ENCODE measurements at regions of chr17 and their contacts with region 1.

Region 1: DNA sequence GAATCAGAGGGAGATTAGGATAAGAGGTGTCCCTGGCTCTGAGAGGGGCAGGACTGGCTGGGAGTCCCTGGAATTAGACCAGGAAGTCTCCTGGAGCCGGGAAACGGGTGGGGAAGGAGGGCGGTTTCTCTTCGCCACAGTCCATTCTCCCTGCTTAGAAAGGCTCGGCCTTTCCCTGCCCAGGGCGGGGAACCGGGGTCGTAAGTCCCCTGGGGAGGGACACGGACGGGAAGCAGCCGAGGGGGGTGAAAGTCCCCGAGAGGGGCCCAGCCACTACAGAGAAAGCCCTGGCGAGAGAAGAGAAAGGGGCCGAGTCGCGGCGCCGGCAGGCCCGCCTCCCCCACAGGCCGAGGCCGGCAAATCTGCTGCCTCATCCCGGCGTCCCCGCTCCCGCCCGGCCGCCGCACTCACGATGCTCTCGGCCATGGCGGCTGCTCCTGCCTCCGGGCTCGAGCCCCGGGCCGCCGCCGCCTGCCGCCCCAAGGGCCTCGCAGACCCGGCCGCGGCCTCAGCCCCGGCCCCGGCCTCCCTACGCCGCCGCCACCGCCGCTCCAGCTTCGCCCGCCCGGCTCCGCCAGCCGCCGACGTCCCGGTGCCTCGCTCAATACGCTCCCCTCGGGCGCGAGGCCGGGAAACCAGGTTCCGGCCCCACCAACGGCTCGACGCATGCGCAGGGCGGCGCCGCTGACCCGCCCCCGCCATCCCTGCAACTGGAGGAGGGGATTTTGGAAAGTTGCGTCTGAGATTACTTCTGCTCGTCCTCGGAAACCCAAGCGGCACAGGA is at the starts of genes NPLOC4 and TSPAN10:
- DNase-seq: peak; percentile 91
- ATAC-seq: peak; percentile 89
- H3K4me3 Mint-ChIP-seq: peak within 1 kb of the TSS; percentile 96
- H3K27ac Mint-ChIP-seq: peak within 1 kb of the TSS; percentile 84
- H3K4me1 Mint-ChIP-seq: peaks cover 23% of the 10 kb centered on the region
- H3K27me3 Mint-ChIP-seq: no peaks in the 10 kb centered on the region
- total RNA-seq, gene NPLOC4: 71.8 to 93.1 TPM
- total RNA-seq, gene TSPAN10: 0.34 to 0.35 TPM

Region 2: DNA sequence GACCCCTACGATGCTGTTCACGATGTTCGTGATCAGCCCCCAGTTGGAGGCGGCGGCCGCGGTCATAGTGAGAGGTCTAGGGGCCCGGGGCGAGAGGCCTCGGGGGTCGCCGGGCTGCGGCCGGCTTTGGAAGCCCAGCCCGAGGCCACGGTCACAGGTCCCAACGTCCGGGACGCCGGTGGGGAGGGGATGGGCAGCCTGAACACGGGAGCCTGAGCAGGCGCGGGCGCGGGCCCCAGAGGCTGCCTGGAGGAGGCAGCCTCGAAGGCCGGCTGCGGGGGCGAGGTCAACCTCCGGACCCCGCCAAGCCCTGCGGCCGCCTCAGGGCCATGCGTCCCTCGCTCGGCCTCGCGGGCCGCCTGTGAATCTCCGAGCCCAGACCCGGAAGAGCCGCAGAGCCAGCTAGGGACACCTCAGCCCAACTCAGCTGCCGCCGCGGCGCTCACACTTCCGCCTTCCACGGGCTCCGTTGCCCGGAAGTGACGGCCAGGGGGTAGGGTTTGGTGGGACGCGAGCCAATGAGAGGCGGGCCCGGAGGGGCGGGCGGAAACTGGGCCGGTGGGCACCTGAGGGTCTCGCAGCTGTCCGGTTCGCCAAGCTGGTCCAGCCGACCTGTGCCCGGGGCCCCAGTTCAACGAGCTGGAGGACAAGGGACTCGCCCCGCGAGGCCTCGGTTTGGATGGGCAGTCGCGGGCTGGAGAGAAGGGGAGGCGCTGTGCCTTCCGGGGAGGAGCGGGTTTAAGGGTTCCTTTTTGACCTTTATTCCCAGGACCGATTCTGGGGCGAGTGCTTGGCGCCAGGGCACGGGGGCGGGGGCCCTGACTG is 341.6 kb before region 1 on chr17 and contains the start of gene SLC38A10:
- CTCF ChIA-PET with region 1: no interaction called
- POLR2A ChIA-PET with region 1: no interaction called
- intact Hi-C with region 1: loop called in 1 of 2 experiments (anchors 2 kb)
- DNase-seq: peak; percentile 95
- ATAC-seq: peak; percentile 91
- H3K4me3 Mint-ChIP-seq: peak within 1 kb of the TSS; percentile 89
- H3K27ac Mint-ChIP-seq: peak within 1 kb of the TSS; percentile 96
- H3K4me1 Mint-ChIP-seq: peaks cover 36% of the 10 kb centered on the region
- H3K27me3 Mint-ChIP-seq: no peaks in the 10 kb centered on the region
- total RNA-seq, gene SLC38A10: 47.6 to 52.9 TPM

Region 3: DNA sequence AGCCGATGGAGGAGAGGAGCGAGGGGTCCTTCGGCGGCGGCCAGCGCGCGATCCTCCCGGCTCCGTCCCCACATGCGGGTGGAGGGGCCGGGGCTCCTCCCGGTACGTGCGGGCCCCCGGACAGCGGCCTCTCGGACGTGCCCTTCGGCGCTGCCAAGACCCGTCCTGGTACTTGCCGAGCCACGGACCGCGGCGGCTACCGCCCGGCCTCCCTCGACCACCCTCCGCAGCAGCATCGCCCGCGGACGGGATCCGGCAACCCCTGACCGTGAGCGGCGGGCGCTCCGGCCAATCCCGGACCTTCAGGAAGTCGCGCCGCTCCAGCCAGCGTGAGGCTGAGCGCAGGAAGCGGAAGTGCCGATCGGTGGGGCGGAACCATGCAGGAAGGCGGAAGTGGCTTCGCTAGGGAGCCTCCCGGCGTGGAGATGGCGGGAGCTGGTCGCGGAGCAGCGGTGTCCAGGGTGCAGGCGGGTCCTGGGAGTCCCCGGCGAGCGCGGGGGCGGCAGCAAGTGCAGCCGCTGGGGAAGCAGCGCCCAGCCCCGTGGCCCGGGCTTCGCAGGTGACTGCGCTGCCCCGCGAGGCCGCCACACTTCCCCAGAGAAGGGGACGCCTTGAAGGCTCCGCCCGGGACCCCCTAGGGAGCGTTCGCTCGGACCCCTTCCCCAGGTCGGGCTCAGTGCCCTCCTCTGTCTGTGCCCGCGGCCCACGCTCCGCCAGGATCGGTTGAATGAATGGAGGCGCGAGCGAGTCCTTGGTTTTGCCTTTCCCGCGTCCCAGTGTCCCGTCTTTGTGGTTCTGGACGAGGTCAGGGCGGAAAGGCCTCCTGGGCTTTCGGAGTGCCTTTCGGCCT is 29.9 kb after region 1 on chr17 and contains the starts of genes CCDC137 and OXLD1:
- CTCF ChIA-PET with region 1: no interaction called
- POLR2A ChIA-PET with region 1: no interaction called
- intact Hi-C with region 1: loop called (anchors 1 to 2 kb)
- DNase-seq: peak; percentile 97
- ATAC-seq: peak; percentile 91
- H3K4me3 Mint-ChIP-seq: peak within 1 kb of the TSS; percentile 91
- H3K27ac Mint-ChIP-seq: peak within 1 kb of the TSS; percentile 97
- H3K4me1 Mint-ChIP-seq: peaks cover 53% of the 10 kb centered on the region
- H3K27me3 Mint-ChIP-seq: no peaks in the 10 kb centered on the region
- total RNA-seq, gene CCDC137: 30.0 to 36.6 TPM
- total RNA-seq, gene OXLD1: 29.4 to 45.3 TPM

Region 4: DNA sequence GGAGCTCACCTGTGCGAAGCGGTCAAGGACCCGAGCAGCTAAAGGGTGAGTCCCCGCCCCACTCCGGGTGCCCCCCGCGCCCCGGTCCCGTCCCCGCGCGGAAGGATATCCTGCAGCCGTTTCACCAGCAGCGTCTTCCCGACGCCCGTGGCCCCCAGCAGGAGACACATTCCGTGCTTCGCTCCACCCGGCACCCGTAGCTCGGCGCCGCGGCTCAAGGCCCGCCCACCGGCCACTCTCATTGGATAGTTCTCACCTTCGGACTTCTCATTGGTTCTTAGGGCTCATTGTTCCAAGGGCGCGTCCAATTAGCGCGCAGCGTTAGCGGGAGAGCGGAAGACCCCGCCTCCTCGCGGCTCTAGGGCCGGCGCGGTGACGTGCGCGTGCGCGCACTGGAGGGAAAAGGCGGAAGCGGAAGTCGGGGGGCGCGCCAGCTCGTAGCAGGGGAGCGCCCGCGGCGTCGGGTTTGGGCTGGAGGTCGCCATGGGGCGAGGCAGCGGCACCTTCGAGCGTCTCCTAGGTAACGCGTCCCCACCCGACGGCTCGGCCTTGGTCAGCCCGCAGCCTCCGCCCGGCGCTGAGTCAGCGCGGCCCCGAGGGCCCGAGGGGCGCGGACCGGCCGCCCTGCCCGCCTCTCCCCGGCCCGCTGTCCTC is 47.0 kb after region 1 on chr17 and contains the starts of genes ARL16 and HGS:
- CTCF ChIA-PET with region 1: no interaction called
- POLR2A ChIA-PET with region 1: interaction called, 3 read pairs
- intact Hi-C with region 1: loop called in 1 of 2 experiments (anchors 1 kb)
- DNase-seq: peak; percentile 98
- ATAC-seq: peak; percentile 98
- H3K4me3 Mint-ChIP-seq: peak within 1 kb of the TSS; percentile 87
- H3K27ac Mint-ChIP-seq: peak within 1 kb of the TSS; percentile 83
- H3K4me1 Mint-ChIP-seq: peaks cover 30% of the 10 kb centered on the region
- H3K27me3 Mint-ChIP-seq: no peaks in the 10 kb centered on the region
- total RNA-seq, gene ARL16: 39.0 to 39.1 TPM
- total RNA-seq, gene HGS: 100 to 102 TPM

Region 5: GRCh38 chr17:81702971-81703746 is 66.5 kb after region 1 on chr17 and contains the start of gene MRPL12:
- CTCF ChIA-PET with region 1: no interaction called
- POLR2A ChIA-PET with region 1: no interaction called
- intact Hi-C with region 1: loop called in 1 of 2 experiments (anchors 2 kb)
- DNase-seq: peak; percentile 95
- ATAC-seq: peak; percentile 89
- H3K4me3 Mint-ChIP-seq: peak within 1 kb of the TSS; percentile 86
- H3K27ac Mint-ChIP-seq: peak within 1 kb of the TSS; percentile 97
- H3K4me1 Mint-ChIP-seq: peaks cover 24% of the 10 kb centered on the region
- H3K27me3 Mint-ChIP-seq: no peaks in the 10 kb centered on the region
- total RNA-seq, gene MRPL12: 94.0 to 116 TPM

Measured in activated CD4-positive, alpha-beta T cell treated with anti-CD3 and anti-CD28 coated beads for 36 hours (primary cell).